Activated T-helper 1 cell treated with anti-CD3 and anti-CD28 coated beads, Interleukin-12 subunit alpha, Interleukin-12 subunit beta, Interleukin-2, Interleukin-4 antibody, amounts not matched to agents 30 ng/mL and 10 ng/mL and 1 ng/mL, durations not matched to agents 14 hours and 24 hours and 36 hours (primary cell): ENCODE measurements at regions of chr2 and their contacts with region 1.

Region 1: DNA sequence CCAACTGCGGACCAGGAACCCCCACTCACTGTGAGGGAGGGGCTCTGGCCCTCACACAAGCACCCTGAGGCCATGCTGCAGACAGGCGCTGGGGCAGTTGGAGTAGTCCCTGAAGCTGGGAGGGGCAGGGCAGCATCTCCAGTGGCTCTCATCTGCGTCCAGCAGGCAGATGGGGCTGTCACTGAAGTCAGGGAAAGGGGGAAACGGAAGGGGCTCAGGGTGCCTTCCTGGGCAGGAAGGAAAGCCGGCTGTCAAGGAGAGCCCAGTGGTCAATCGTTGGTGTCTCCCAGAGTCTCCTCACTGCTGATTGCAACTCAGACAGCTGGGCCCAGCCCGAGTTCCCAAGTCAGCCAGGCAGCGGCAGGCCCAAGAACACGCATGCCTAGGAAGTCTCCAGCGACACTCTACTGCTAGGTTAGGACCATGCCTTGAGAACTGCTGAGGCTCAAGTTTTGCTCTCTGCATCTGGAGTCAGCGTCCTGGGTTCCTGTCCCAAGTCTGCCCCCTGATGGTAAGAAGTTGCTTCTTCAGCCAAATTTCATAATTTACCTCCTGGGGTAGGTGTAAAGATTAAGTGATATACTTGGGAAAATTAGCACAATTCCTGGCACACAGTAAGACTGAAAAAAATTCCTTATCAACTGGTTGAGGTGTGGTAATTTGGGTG is 27.5 kb upstream of the NMUR1 start:
- DNase-seq: peak; percentile 64
- H3K4me3 Mint-ChIP-seq: no peak overlapping the region
- H3K27ac Mint-ChIP-seq: no peak overlapping the region
- H3K4me1 Mint-ChIP-seq: peaks cover 32% of the 10 kb centered on the region
- H3K27me3 Mint-ChIP-seq: no peaks in the 10 kb centered on the region

Region 2: DNA sequence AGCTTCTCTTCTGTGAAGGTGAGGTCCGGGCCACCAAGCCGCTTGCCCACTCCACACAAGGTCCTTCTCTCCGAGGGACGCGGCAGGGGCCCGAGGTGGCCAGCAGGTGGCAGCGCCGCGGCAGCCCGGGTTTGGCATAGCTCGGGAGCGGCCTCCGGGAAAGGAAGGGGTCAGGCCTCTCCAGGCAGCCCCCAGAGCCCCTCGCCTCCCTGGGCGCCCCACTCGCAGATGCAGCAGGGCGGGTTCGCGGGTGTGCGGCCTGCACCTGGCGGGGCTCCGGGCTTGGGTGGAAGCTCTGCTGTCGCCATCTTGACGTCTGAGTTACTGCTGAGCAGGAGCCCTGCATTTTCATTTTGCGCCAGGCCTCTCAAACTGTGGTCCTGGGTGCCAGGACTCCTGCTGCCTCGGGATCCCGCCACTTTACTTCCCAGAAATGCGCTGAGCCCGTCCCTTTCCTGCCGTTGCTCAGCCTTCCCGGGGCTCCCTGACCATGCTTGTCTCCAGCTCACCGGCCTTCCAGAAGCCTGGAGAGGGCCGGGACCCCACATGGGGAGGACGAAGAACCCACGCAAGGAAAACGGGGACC is 74.8 kb before region 1 on chr2:
- intact Hi-C with region 1: loop called (anchors 1 kb)
- DNase-seq: peak; percentile 66
- H3K4me3 Mint-ChIP-seq: peak overlapping the region; percentile 77
- H3K27ac Mint-ChIP-seq: peak overlapping the region; percentile 86
- H3K4me1 Mint-ChIP-seq: peaks cover 6% of the 10 kb centered on the region
- H3K27me3 Mint-ChIP-seq: peaks cover 2% of the 10 kb centered on the region

Region 3: GRCh38 chr2:231530091-231531011 is 27.4 kb before region 1 on chr2 and contains the start of gene NMUR1:
- intact Hi-C with region 1: loop called (anchors 1 kb)
- DNase-seq: peak; percentile 70
- H3K4me3 Mint-ChIP-seq: no peak within 1 kb of the TSS
- H3K27ac Mint-ChIP-seq: peak within 1 kb of the TSS; percentile 6
- H3K4me1 Mint-ChIP-seq: peaks cover 20% of the 10 kb centered on the region
- H3K27me3 Mint-ChIP-seq: peaks cover 26% of the 10 kb centered on the region
- total RNA-seq, gene NMUR1: 0.05 TPM in 1 of 2 replicates, not detected in the other

Region 4: GRCh38 chr2:231545105-231545902 is 12.4 kb before region 1 on chr2:
- intact Hi-C with region 1: loop called (anchors 1 kb)
- DNase-seq: peak; percentile 76
- H3K4me3 Mint-ChIP-seq: peak overlapping the region; percentile 79
- H3K27ac Mint-ChIP-seq: peak overlapping the region; percentile 96
- H3K4me1 Mint-ChIP-seq: peaks cover 45% of the 10 kb centered on the region
- H3K27me3 Mint-ChIP-seq: peaks cover 5% of the 10 kb centered on the region

Region 5: DNA sequence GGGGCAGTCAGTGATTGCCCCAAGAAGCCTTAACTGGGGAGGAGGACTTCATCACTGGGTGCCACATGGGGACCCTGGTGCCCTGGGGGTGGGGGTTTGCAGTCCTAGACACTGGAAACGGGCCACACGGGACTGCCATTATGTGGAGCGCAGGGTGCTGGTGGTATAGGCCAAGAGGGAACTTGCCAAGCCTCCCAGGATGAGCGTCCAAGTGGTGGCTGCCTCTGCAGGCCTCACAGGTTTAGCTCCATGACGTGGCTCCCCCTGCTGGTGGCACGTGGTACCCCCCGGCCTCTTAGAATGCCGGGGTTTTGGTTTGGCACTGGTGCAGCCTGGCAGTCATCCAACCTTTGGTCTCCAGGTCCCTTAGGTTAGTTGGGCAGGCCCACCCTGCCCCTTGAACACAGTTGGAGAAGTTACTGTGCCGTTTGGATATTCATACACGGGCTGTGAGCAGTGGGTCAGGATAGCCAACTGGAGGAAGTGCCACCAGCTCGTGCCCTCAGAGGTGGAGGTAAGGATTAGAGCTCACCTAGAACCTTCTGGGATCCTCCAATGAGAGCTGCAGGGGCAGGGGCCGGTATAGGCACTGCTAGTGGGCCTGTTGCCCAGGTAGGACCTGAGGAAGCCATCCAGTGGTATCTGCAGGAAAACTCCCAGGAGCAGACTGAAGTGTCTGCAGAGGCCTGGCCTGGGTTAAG is 156.2 kb after region 1 on chr2:
- intact Hi-C with region 1: loop called (anchors 5 kb)
- DNase-seq: peak; percentile 78
- H3K4me3 Mint-ChIP-seq: peak overlapping the region; percentile 75
- H3K27ac Mint-ChIP-seq: peak overlapping the region; percentile 93
- H3K4me1 Mint-ChIP-seq: peaks cover 26% of the 10 kb centered on the region
- H3K27me3 Mint-ChIP-seq: no peaks in the 10 kb centered on the region

Region 6: DNA sequence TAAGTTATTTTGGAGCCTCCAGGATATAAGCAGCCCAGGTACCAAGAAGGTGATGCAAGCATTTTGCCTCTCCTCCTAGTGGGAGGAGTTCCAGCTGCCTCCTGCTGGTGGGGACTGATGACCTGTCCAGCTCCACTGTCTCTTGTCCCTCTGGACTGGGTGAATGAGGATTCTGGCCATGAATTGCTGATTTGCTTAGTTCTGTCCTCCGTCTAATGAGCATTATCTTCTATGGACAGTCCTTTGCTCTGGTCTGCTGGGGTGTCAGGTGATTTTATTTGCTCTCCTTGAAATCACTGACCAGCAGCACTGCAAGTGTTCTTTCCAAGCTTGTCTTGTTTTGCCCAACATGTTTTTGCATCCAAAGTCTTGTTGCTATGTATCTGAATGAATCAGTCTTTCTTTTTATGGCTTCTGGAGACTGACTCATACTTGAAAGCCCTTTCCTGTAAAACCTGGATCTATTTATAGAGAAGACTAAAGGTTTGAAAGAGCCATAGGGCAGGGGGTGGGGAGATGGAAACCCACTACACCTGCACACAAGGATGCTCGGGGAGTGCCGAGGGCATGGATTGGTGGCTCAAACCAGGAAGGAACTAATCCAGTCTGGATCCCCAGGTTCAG is 1035.2 kb after region 1 on chr2:
- intact Hi-C with region 1: no loop called
- DNase-seq: no peak
- H3K4me3 Mint-ChIP-seq: peak overlapping the region; percentile 20
- H3K27ac Mint-ChIP-seq: peak overlapping the region; percentile 83
- H3K4me1 Mint-ChIP-seq: peaks cover 15% of the 10 kb centered on the region
- H3K27me3 Mint-ChIP-seq: no peaks in the 10 kb centered on the region